Head of caudate nucleus (tissue), 42 donors: ENCODE measurements at regions of chr17 and their contacts with region 1.

Region 1: GRCh38 chr17:76139801-76140660 is 1.0 kb downstream of the FOXJ1 start:
- DNase-seq: no peak

Region 2: DNA sequence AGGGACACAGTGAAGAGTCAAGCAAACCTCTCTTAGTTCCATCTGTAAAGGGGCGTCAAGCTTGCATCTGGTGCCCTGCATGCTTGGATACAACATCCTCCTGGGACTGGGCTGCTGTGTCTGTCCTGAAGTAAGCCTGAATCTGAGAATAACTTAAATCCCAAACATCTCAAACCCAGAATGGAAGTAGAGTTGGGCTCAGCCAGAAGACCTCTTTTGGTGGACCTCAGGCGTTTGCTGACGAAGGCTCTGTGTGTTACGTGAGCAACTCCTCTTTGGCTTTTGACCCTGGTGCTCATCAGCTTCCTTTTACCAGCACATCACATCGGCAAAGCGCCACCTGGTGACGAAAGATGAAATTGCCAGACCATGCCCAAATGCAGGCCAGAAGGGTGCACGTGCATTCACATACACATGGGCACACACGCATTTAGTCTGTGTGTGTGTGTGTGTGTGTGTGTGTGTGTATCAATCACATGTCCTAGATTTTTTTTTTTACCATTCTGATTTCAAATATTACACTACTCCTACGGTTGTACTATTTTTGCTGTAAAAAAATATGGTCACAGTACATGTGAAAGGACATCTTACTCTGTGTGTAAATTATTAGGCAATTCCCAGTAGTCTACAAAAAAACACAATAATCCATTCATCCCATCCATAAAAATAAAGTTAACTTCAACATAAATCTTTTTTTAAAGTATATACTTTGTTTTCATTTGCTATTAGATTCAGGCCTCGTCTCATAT is 42.2 kb after region 1 on chr17:
- intact Hi-C with region 1: loop called (anchors 10 kb)
- DNase-seq: peak; percentile 32 to 96 (median 90)